CD14-positive monocyte (primary cell): ENCODE measurements at regions of chr6 and their contacts with region 1.

Region 1: DNA sequence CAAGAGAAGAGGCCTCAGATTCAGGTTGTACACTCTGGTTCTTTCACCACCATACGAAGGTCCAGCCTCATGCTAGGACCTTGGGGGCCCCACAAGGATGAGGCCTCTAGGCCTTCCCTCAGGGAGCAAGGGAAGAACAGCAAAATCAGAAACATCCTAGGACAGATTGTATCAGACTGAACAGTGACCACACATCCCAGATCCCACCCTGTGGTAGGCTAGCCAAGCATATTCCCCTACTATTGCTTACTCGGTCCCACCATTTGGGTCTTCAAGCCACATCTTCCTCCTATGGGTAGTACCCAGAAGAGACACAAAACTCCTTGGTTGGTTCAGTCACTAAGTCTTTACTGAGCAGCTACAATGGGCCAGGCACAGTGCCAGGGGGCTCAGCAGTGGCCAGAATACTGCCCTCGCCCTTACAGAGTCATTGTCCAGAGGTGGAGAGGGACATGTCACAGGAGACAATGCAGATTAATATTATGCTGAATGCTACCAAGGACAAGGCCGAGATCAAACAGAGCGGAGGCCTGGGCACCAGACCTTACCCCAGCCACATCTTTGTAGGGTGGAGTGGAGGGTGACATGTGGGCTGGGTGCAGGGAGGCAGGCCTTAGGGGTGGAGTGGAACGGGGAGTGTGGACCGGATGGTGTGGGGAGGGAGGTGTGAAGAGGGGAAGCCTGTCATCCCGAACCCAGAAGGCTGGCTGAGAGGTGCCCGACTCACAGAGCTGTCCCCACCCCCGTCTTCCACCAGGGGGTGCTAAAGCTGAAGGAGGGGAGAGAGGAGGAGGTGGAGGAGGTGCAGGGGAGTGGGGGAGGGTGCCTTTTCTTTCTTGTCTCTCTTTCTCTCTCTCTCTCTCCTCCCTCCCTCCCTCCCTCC is 6.8 kb upstream of the MAPK13 start:
- DNase-seq: peak; percentile 75 to 83 (median 82)
- H3K4me3 ChIP-seq: no peak overlapping the region
- H3K4me3 Mint-ChIP-seq: peak overlapping the region in 1 of 2 donors; percentile 27
- H3K27ac ChIP-seq: peak overlapping the region; percentile 1 to 69
- H3K27ac Mint-ChIP-seq: peak overlapping the region; percentile 73 to 99 (median 89)
- H3K4me1 ChIP-seq: peaks cover 79 to 82% of the 10 kb centered on the region in 2 donors
- H3K4me1 Mint-ChIP-seq: peaks cover 88% of the 10 kb centered on the region
- H3K27me3 ChIP-seq: no peaks in the 10 kb centered on the region
- H3K27me3 Mint-ChIP-seq: peaks cover 0 to 5% (median 0%) of the 10 kb centered on the region in 3 donors
- CTCF ChIP-seq: peak; percentile 65

Region 2: DNA sequence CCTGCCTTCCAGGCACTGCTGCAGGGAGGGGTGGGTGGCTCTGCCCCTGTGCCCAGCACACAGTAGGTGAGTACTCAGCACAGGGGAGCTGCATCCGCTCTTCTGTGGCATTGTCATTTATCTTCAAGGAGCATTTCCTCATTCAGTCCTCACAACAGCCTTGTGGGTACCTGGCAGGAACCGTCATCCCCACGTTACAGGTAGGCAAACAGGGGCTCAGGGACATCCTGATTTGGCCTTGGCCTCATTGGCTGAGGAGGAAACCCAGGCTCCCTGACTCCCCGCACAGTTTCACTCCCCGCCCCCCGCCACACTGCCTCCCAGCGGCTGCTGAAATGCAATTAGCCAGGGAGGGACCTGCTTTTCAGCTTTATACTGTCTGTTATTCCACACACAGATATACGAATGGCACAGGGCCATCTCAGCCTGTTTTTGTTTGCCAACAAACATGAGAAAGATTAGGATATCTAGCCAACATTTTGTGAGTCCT is 122.1 kb after region 1 on chr6:
- intact Hi-C with region 1: loop called in 1 of 2 experiments (anchors 5 kb)
- DNase-seq: peak in 2 of 3 donors; percentile 8 to 33
- H3K4me3 ChIP-seq: peak overlapping the region in 1 of 3 experiments; percentile 22
- H3K4me3 Mint-ChIP-seq: no peak overlapping the region
- H3K27ac ChIP-seq: peak overlapping the region; percentile 63 to 89
- H3K27ac Mint-ChIP-seq: peak overlapping the region; percentile 69 to 95 (median 92)
- H3K4me1 ChIP-seq: peaks cover 77 to 89% of the 10 kb centered on the region in 2 donors
- H3K4me1 Mint-ChIP-seq: peaks cover 88% of the 10 kb centered on the region
- H3K27me3 ChIP-seq: no peaks in the 10 kb centered on the region
- H3K27me3 Mint-ChIP-seq: peaks cover 0 to 10% (median 7%) of the 10 kb centered on the region in 3 donors
- CTCF ChIP-seq: peak; percentile 16

Region 3: DNA sequence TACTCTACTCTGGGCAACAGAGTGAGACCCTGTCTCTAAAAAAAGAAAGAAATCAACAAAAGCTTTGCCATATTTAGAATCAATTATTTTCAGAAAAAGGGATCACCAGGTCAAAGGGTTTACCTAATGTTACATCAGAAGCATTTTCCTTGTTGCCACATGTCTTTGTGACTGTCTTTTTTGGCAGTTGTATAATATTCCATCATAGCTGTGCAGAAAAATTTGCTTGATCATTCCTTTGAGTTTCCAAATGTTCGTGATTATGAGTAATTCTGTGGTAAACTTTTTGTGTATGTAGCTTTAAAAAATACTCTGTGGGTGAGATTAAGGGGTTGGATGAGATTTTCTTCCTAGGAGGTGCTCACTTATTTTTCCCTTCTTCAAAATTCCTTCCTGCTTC is 172.7 kb after region 1 on chr6:
- intact Hi-C with region 1: loop called (anchors 2 to 5 kb)
- DNase-seq: peak; percentile 73 to 92 (median 90)
- H3K4me3 ChIP-seq: peak overlapping the region in 1 of 3 experiments; percentile 40
- H3K4me3 Mint-ChIP-seq: peak overlapping the region in 1 of 2 donors; percentile 30
- H3K27ac ChIP-seq: peak overlapping the region; percentile 86 to 90
- H3K27ac Mint-ChIP-seq: peak overlapping the region; percentile 88 to 98 (median 93)
- H3K4me1 ChIP-seq: peaks cover 65 to 84% of the 10 kb centered on the region in 2 donors
- H3K4me1 Mint-ChIP-seq: peaks cover 83% of the 10 kb centered on the region
- H3K27me3 ChIP-seq: no peaks in the 10 kb centered on the region
- H3K27me3 Mint-ChIP-seq: peaks cover 0 to 7% (median 5%) of the 10 kb centered on the region in 3 donors
- CTCF ChIP-seq: no peak

Region 4: DNA sequence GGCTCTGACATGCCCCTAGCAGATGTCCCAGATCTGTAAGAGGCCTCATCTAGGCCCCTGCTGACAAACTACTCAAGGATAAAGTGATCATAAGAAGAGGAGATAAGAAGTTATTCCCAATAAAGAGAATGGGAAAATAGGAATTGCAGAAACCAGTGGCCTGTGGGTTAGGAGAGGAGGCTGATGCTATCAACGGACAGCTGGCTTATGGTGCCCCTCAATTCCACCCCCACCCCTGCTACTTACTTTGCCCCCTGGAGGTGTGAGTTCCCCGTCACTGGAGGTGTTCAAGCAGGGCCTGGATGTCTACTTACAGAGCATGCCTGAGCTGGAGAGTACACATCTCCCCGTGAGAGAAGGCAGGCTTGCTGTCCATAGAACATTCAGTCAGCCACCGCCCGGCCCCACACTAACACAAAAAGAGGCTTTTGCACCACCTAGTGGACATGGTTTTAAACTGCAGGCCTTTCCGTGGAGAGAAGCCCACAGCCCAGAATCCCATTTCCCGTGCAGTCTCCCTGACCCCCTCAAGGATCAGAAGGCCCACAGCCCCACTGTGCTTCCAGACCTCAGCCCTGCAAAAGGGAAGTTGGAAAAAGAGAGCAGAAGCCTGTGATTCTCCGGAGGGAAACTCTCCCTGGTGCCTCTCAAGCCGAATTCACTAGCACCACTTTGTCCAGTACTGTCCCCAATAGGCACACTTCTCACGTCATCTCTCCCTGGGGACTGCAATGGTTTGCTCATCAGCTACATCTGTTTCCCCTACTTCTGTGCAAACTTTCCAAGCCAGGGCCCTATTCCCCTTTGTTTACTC is 236.9 kb after region 1 on chr6:
- intact Hi-C with region 1: loop called in 1 of 2 experiments (anchors 10 kb)
- DNase-seq: peak; percentile 50 to 74 (median 72)
- H3K4me3 ChIP-seq: no peak overlapping the region
- H3K4me3 Mint-ChIP-seq: no peak overlapping the region
- H3K27ac ChIP-seq: no peak overlapping the region
- H3K27ac Mint-ChIP-seq: peak overlapping the region in 2 of 7 donors; percentile 8 to 55
- H3K4me1 ChIP-seq: peaks cover 42 to 47% of the 10 kb centered on the region in 2 donors
- H3K4me1 Mint-ChIP-seq: peaks cover 42% of the 10 kb centered on the region
- H3K27me3 ChIP-seq: no peaks in the 10 kb centered on the region
- H3K27me3 Mint-ChIP-seq: peaks cover 0 to 3% (median 1%) of the 10 kb centered on the region in 3 donors
- CTCF ChIP-seq: peak; percentile 80